Activated naive CD4-positive, alpha-beta T cell treated with anti-CD3 and anti-CD28 coated beads for 36 hours (primary cell): ENCODE measurements at regions of chr14 and their contacts with region 1.

Region 1: DNA sequence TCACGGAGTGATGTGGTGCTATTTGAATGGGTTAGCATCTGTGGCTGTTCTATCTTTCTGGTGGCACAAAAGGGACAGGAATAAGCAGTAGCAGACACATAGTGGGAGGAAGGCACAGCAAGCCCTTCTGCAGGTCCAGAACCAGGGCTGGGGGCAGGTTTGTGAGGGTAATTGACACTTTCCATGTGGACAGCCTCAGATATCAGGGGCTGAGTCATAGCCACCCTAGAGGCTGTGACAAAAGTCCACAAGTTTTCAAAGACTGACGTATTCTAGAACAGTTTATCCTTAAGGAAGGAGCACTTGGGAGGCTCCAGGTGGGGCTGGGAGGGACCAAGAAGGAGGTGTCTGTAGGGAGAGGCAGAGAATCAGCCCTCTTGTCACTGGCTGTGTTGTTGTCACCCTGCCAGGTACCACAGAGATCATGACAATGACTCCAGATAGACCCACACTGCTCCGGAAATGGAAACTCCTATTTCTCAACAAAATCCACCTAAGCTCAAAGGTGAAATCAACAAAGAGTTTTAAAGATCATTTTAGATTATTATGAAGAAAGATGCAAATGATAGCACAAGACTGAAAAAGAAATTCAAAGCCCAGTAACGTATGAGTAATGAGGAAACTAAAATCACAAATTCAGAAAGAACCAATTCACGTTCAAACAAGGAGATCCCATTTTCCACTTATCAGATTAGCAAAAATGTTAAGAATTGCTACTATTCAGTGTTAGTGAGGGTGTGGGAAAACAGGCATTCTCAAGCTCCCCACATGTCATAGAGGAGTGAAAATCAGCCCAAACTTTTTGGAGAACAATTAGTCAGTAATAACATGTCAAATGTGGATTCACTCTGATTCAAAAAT is 48.3 kb downstream of the NFKBIA start:
- DNase-seq: peak; percentile 86
- H3K4me3 Mint-ChIP-seq: peak overlapping the region; percentile 12
- H3K27ac Mint-ChIP-seq: peak overlapping the region; percentile 91
- H3K4me1 Mint-ChIP-seq: peaks cover 46% of the 10 kb centered on the region
- H3K27me3 Mint-ChIP-seq: no peaks in the 10 kb centered on the region

Region 2: DNA sequence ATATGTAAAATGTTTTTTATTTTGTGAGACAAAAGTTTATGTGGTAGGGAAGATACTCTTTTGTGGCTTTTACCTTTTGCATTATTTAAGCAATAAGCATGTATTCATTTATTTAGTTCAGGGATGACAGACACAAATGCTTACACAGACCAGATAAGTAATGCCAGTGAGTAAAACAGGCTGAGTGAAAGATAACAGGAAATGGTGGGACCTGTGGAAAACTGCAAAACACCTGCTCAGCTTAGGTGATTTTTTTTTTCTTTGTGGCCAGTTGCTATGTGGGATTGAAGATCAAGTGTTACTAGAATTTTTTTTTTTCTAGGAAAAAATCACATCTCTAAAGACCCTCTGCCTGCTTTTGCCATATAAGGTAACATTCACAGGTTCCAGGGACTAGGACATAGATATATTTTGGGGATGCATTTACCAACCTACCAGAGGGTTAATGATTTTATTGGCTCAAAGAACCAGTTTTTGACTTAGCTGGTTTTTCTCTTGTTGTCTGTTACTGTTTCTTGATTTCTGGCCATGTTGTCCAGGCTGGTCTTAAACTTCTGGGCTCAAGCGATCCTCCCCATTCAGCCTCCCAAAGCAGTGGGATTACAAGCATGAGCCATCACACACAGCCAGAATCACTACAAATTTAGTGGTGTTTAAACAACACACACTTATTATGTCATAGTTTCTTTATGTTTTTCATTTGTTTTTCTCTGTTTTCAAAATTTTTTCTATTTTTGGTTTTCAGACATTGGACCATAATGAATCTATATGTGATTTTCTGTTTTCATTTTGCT is 54.3 kb before region 1 on chr14:
- CTCF ChIA-PET with region 1: no interaction called
- intact Hi-C with region 1: loop called (anchors 1 kb)
- DNase-seq: peak; percentile 14
- H3K4me3 Mint-ChIP-seq: peak overlapping the region; percentile 27
- H3K27ac Mint-ChIP-seq: peak overlapping the region; percentile 89
- H3K4me1 Mint-ChIP-seq: peaks cover 68% of the 10 kb centered on the region
- H3K27me3 Mint-ChIP-seq: no peaks in the 10 kb centered on the region

Region 3: GRCh38 chr14:35320472-35320871 is 35.7 kb before region 1 on chr14:
- CTCF ChIA-PET with region 1: no interaction called
- intact Hi-C with region 1: loop called (anchors 1 kb)
- DNase-seq: no peak
- H3K4me3 Mint-ChIP-seq: no peak overlapping the region
- H3K27ac Mint-ChIP-seq: no peak overlapping the region
- H3K4me1 Mint-ChIP-seq: peaks cover 1% of the 10 kb centered on the region
- H3K27me3 Mint-ChIP-seq: no peaks in the 10 kb centered on the region